Activated CD4-positive, alpha-beta T cell treated with anti-CD3 and anti-CD28 coated beads, Interleukin-2, amount 10 ng/mL, durations not matched to agents 7 days and 5 days (primary cell): ENCODE measurements at regions of chr15 and their contacts with region 1.

Region 1: GRCh38 chr15:40782580-40783227 is 12.9 kb downstream of the C15orf62 start:
- DNase-seq: peak; percentile 84
- H3K4me3 Mint-ChIP-seq: no peak overlapping the region
- H3K27ac Mint-ChIP-seq: no peak overlapping the region
- H3K4me1 Mint-ChIP-seq: peaks cover 20% of the 10 kb centered on the region
- H3K27me3 Mint-ChIP-seq: no peaks in the 10 kb centered on the region

Region 2: GRCh38 chr15:40647523-40647922 is 135.2 kb before region 1 on chr15:
- CTCF ChIA-PET with region 1: no interaction called
- POLR2A ChIA-PET with region 1: no interaction called
- DNase-seq: no peak
- H3K4me3 Mint-ChIP-seq: no peak overlapping the region
- H3K27ac Mint-ChIP-seq: no peak overlapping the region
- H3K4me1 Mint-ChIP-seq: no peaks in the 10 kb centered on the region
- H3K27me3 Mint-ChIP-seq: no peaks in the 10 kb centered on the region

Region 3: GRCh38 chr15:40763801-40764732 is 18.6 kb before region 1 on chr15 and contains the start of gene GCHFR:
- CTCF ChIA-PET with region 1: interaction called, 11 read pairs
- POLR2A ChIA-PET with region 1: no interaction called
- DNase-seq: peak; percentile 71
- H3K4me3 Mint-ChIP-seq: peak within 1 kb of the TSS; percentile 84
- H3K27ac Mint-ChIP-seq: peak within 1 kb of the TSS; percentile 92
- H3K4me1 Mint-ChIP-seq: peaks cover 45% of the 10 kb centered on the region
- H3K27me3 Mint-ChIP-seq: no peaks in the 10 kb centered on the region
- total RNA-seq, gene GCHFR: 33.9 to 35.5 TPM

Region 4: GRCh38 chr15:40769274-40770146 is 13.2 kb before region 1 on chr15 and contains the start of gene C15orf62:
- CTCF ChIA-PET with region 1: interaction called, 16 read pairs
- POLR2A ChIA-PET with region 1: no interaction called
- DNase-seq: peak; percentile 50
- H3K4me3 Mint-ChIP-seq: peak within 1 kb of the TSS; percentile 37
- H3K27ac Mint-ChIP-seq: peak within 1 kb of the TSS; percentile 90
- H3K4me1 Mint-ChIP-seq: peaks cover 43% of the 10 kb centered on the region
- H3K27me3 Mint-ChIP-seq: no peaks in the 10 kb centered on the region
- total RNA-seq, gene C15orf62: 1.0 to 1.3 TPM

Region 5: DNA sequence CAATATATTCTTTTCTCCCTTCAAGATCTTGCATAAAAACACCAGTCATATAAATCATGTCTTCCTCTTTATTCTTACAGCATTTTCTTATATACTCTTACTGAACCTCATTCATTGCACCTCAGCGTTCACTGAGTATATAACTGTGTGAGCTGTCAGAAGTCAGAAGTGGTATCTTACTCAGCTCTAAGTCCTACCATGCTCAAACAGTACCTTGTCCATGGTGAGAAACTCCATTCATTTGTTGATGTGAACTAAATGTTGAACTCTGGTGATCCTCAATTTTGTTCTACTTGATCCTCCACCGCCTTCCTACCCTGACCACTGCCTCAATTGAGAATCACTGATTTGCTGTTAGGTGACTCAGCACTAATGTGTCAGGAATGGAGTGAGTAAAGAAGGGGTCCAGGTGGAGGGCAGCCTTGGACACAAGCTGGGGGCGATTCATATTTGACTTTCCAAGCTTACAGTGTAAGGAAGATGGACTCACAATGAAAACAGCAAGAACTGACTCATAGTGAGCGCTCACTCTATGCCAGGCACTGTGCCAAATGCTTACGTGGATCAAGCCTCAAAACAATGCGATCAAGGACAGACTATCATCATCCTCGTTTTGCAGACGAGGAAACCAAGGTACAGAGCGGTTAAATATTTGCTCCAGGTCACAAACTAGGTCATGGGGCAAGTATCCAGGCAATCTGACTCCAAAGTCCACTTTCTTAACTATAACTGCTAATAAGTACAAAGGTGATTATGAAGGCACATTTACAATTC is 10.7 kb after region 1 on chr15:
- CTCF ChIA-PET with region 1: interaction called, 13 read pairs
- POLR2A ChIA-PET with region 1: no interaction called
- DNase-seq: no peak
- H3K4me3 Mint-ChIP-seq: no peak overlapping the region
- H3K27ac Mint-ChIP-seq: peak overlapping the region; percentile 19
- H3K4me1 Mint-ChIP-seq: peaks cover 22% of the 10 kb centered on the region
- H3K27me3 Mint-ChIP-seq: no peaks in the 10 kb centered on the region